AG04450 (cell line): ENCODE measurements at regions of chrX and their contacts with region 1.

Region 1: GRCh38 chrX:117985241-117985640 is 131.4 kb downstream of the KLHL13 start:
- DNase-seq: no peak
- H3K4me3 ChIP-seq: no peak overlapping the region
- H3K27ac ChIP-seq: no peak overlapping the region
- H3K27me3 ChIP-seq: no peaks in the 10 kb centered on the region
- CTCF ChIP-seq: peak; percentile 20; the same call in 1 of the 2 replicates

Region 2: GRCh38 chrX:117972711-117973109 is 12.5 kb before region 1 on chrX:
- CTCF ChIA-PET with region 1: interaction called, 15 read pairs
- POLR2A ChIA-PET with region 1: no interaction called
- DNase-seq: no peak
- H3K4me3 ChIP-seq: no peak overlapping the region
- H3K27ac ChIP-seq: no peak overlapping the region
- H3K27me3 ChIP-seq: no peaks in the 10 kb centered on the region
- CTCF ChIP-seq: no peak